A673 (cell line): ENCODE measurements at regions of chr17 and their contacts with region 1.

Region 1: GRCh38 chr17:75827252-75828115 is 16.7 kb downstream of the UNC13D start:
- DNase-seq: peak; percentile 86
- H3K4me3 ChIP-seq: peak overlapping the region; percentile 38
- H3K27ac ChIP-seq: peak overlapping the region; percentile 68
- H3K4me1 ChIP-seq: peaks cover 11% of the 10 kb centered on the region
- H3K27me3 ChIP-seq: no peaks in the 10 kb centered on the region
- CTCF ChIP-seq: peak; percentile 89

Region 2: GRCh38 chr17:75707131-75707571 is 120.3 kb before region 1 on chr17:
- CTCF ChIA-PET with region 1: no interaction called
- POLR2A ChIA-PET with region 1: no interaction called
- intact Hi-C with region 1: no loop called
- DNase-seq: no peak
- H3K4me3 ChIP-seq: no peak overlapping the region
- H3K27ac ChIP-seq: no peak overlapping the region
- H3K4me1 ChIP-seq: no peaks in the 10 kb centered on the region
- H3K27me3 ChIP-seq: no peaks in the 10 kb centered on the region
- CTCF ChIP-seq: no peak

Region 3: DNA sequence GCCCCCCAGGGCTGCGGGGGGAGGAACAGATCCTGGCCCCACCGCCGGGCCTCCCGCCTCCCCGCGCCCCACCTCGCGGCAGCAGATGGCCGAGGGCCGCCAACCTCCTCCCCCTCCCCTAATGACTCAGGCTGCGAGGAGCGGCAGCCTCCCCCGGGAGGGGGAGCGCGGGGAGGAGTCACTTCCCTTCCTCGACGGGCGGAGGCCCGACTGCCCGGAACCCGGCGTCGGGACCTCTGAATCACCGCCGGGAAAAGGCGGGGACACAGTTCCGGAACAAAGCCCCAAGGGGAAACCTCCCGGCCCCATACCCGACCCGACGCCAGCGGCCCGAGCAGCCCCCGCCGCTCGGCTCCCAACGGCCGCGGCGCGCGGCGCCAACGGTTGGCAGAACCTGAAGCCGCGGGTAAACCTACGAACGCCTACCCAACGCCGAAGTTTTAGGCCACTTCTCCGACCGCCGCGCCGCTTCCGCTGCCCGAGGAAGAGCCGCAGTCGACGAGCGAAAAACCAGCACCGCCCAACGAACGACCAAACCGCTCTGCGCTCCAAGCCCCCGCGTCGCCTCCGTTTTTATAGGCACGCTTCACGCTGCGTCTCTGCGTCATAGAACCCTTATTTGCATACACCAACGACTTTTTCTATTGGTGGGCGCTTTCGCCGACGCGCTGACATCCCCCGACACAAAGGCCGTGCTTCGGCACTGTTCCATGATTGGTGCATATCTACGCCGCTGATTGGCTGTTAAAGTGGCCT is 48.1 kb before region 1 on chr17:
- CTCF ChIA-PET with region 1: no interaction called
- POLR2A ChIA-PET with region 1: no interaction called
- intact Hi-C with region 1: loop called (anchors 1 kb)
- DNase-seq: peak; percentile 100
- H3K4me3 ChIP-seq: peak overlapping the region; percentile 88
- H3K27ac ChIP-seq: peak overlapping the region; percentile 98
- H3K4me1 ChIP-seq: peaks cover 28% of the 10 kb centered on the region
- H3K27me3 ChIP-seq: no peaks in the 10 kb centered on the region
- CTCF ChIP-seq: 0 out of 2 replicates have a peak, but pooled peaks have one; percentile 0